BJ (cell line): ENCODE measurements at regions of chr12 and their contacts with region 1.

Region 1: DNA sequence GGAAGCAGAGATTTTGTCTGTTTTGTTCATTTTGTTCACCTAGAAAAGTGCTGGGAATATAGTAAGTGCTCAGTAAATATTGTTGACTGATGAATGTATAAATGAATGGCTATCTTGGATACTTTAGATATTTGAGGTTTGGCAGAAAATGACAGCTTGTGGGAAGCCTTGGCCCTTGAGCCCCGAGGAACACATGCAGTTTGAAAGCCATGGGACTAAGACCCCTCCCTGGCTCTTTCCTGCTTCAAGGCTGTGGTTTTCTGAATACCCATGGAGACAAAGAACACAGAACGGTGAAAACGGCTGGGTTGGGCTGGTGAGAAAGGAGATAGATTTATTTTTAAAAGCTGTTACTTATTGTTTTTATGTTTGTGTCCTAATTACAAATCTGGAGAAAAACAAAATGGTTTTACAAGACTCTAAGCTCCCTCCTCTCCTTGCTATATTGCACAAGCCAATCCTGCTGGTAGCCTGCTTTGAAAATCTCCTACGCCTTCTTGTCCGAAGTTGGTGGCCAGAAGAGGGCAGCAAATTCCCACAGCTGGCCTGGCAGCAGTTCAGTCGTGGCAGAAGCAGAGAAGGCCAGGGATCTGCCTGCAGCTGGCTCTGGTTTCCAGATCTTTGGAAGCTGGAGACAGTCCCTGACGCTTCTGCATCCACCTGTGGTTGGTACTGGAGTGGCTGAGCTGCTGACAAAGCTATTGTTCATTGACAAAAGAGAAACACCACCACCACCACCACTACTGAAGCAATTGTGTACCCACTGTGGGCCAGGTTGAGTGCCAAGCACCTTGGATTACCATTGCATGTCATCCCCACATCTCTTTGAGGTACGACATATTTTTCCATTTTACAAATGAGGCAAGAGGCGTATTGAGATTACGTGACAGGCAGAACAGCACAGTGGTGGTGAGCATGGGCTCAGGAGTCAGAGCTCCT is 5.2 kb upstream of the KRT85 start:
- DNase-seq: peak; percentile 47
- H3K4me3 ChIP-seq: no peak overlapping the region
- H3K27me3 ChIP-seq: peaks cover 12% of the 10 kb centered on the region
- CTCF ChIP-seq: peak; percentile 93

Region 2: DNA sequence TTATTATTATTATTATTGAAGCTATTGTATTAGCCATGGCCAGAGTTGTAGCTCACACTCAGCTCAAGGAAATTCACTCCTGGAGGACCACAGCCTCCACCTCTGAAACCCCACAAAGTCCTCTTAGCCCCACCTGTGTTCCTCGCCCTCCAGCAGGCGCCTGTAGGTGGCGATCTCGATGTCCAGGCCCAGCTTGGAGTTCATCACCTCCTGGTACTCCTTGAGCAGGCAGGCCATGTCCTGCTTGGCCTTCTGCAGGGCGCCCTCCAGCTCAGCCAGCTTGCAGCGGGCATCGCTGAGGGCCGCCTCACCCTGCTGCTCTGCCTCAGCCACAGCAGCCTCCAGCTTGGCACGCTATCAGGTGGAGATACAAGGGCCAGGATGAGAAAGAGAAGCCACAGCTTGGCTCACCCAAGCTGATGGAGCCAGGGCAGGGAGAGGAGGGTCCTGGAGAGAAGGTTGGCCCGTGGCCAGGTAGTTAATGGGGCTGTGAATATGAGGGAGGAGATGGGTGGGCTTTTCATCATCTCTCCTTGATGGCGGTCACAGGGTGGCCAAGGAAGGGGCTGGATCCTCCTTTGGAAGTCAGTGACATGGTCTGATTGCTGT is 10.3 kb before region 1 on chr12:
- CTCF ChIA-PET with region 1: interaction called, 22 read pairs
- POLR2A ChIA-PET with region 1: no interaction called
- DNase-seq: no peak
- H3K4me3 ChIP-seq: no peak overlapping the region
- H3K27me3 ChIP-seq: peaks cover 9% of the 10 kb centered on the region
- CTCF ChIP-seq: no peak

Region 3: DNA sequence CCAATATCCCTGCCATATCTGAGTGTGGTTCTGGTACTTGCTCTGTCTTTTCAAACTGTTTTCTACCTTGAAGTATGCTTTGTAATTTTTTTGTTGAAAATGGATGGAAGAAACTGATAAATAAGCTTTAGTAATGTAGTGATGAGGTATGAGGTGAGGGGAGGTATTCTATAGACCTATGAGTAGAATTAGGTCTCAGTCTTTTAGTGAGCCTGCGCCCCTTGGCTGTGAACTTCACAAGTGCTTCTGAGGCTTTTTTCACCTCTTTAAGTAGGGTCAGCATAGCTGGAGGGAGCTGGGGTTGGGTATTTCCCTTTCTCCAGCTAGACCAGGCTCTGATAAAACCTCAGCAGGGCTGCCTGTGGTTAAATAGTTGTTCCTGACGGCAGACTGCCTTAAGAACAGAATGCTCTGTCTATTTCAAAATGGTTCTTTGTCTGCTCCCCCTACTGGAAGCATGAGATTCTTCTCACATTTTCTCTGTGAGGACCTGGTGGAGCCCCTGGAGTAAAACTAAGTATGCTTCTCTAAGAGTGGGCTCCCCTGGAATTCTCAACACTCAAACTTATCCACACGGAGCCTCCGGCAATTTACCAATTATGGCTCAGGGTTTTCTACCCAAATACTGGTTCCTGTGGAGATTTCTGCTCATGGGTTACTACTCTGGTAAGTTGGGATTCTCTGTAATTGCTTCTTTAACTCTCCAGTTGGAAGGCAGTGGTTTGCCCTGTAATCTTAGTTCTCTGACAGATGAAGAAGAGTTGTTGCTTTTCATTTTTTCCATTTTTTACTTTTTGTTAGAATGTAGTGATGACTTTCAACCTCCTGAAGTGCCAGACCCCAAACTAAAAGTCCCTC is 134.6 kb after region 1 on chr12:
- CTCF ChIA-PET with region 1: interaction called, 17 read pairs
- POLR2A ChIA-PET with region 1: no interaction called
- DNase-seq: no peak
- H3K4me3 ChIP-seq: no peak overlapping the region
- H3K27me3 ChIP-seq: peaks cover 8% of the 10 kb centered on the region
- CTCF ChIP-seq: peak; percentile 71

Region 4: DNA sequence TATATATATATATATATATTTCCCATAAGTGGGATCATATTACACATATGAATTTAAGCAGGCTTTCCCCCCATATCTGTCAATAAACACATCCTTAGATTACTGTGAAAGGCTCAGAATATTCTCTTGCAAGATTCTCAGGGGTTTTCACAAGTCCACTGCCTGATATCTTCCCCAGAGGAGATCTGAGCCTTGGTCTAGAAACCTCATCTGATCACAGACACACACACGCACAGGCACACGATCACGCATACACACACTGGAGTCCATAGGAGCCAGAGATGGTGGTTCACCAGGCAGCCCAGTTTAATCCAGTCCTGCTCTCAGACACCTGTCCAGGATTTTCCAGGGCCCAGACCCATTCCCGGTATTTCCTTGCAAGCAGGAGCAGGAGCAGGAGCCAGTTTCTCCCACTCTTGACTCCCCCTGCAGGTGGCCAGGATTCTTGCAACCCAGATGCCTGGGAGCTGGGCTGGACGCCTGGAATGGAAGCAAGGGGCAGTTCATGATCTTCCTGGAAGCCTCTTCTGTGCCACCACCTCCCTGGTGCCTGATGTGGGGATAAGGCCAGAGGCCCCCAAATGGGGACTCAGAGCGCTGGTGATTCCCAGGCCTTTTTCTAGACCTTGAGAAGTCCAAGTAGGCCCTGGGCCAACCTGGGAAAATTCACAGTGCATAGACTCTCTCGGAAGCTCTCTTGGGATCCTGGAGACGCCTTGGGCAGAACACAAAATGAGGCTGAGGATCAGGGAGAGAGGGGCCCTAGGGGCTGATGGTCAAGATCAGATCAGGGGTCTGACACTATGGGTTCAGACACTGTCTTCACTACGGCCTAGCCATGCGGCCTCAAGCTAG is 492.8 kb after region 1 on chr12:
- CTCF ChIA-PET with region 1: interaction called, 10 read pairs
- POLR2A ChIA-PET with region 1: no interaction called
- DNase-seq: no peak
- H3K4me3 ChIP-seq: no peak overlapping the region
- H3K27me3 ChIP-seq: no peaks in the 10 kb centered on the region
- CTCF ChIP-seq: peak; percentile 96

Region 5: DNA sequence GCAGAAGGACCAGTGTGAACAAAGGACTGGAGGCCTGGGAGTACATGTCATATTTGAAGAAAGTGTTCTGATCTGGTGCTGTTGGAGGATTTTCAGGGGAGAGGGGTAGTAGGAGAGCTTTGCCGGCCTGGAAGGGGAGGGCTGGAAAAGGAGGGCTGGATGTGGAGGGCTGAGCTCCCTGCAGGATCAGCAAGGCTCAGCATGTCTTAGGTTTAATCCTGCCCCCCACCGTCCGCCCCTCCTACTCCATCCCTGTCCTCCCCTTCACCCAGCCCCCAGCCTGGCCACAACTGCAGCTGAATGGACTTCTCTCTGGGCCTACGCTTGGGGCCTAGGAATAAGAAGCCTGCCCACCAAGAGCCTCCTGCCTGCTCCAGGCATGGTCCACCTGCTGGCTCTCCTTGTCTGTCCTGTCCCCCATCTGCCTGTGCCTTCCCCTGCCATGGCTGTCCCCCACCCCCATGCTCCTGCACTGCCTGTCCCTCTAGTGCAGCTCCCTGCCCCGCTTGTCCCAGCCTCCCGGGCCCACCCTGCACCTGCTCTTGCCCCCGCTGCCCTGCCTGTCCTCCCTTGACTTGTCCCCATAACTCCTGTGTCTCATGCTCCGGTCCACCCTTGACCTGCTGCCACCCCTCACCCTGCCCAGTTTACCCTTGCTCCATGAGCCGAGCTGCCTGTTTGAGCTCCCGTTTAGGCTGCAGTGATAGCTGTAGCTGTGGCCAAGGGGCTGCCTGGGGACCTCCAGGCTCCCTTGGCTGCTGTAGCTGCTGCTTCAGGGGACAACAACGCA is 869.3 kb after region 1 on chr12:
- CTCF ChIA-PET with region 1: no interaction called
- POLR2A ChIA-PET with region 1: no interaction called
- DNase-seq: no peak
- H3K4me3 ChIP-seq: no peak overlapping the region
- H3K27me3 ChIP-seq: peaks cover 18% of the 10 kb centered on the region
- CTCF ChIP-seq: no peak